Left lung (tissue), 14 donors: ENCODE measurements at regions of chr9 and their contacts with region 1.

Region 1: DNA sequence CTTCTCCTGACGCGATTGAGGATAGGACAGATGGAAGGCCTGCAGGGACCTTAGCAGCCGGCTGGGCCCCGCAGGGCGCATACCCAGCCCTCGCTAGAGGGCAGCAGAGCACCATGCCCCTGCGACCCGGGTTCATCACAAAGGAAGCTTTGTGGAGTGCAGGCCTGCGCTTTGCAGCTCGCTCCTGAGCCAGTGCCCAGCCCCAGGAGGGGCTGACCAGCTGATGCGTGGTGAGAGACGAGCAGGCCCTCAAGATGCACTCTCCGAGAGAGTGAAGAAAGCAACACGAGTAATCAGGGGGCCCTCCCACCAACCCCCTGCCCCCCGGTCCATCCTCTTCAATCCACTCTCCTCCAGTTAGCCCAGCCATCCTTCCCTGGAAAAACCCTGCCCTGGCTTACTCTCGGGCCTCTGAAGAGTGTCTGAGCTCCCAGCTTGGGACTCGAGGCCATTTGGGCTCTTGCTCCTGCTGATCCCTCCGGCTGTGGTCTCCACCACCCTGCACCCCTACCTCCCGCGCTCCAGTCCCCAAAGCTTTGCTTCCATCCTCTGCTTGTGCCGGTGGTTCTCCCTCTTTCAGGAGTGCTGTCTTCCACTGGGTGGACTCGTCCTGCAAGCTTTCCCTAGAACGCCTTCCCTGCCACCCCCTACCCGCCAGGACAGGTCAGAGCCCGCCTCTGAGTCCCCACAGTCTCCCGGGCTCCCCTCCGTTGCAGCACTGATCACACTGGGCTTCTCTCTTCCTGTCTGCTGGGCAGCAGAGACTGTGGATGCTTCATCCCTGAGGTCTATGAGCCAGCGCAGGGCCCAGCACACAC is 9.1 kb upstream of the KIF12 start:
- DNase-seq: peak; percentile 72 to 92 (median 84)
- ATAC-seq: peak; percentile 100
- H3K4me3 ChIP-seq: no peak overlapping the region
- H3K27ac ChIP-seq: no peak overlapping the region
- H3K4me1 ChIP-seq: peaks cover 0 to 6% of the 10 kb centered on the region in 2 donors
- H3K27me3 ChIP-seq: peaks cover 0 to 6% of the 10 kb centered on the region in 2 donors
- CTCF ChIP-seq: peak; percentile 87 to 94

Region 2: GRCh38 chr9:114059047-114059803 is 49.0 kb before region 1 on chr9:
- intact Hi-C with region 1: no loop called
- DNase-seq: no peak
- ATAC-seq: no peak
- H3K4me3 ChIP-seq: no peak overlapping the region
- H3K27ac ChIP-seq: no peak overlapping the region
- H3K4me1 ChIP-seq: no peaks in the 10 kb centered on the region
- H3K27me3 ChIP-seq: no peaks in the 10 kb centered on the region
- CTCF ChIP-seq: no peak

Region 3: GRCh38 chr9:114291064-114291474 is 182.8 kb after region 1 on chr9:
- intact Hi-C with region 1: loop called in 1 of 2 experiments (anchors 5 kb)
- DNase-seq: peak; percentile 65 to 89 (median 72)
- ATAC-seq: peak; percentile 80
- H3K4me3 ChIP-seq: no peak overlapping the region
- H3K27ac ChIP-seq: no peak overlapping the region
- H3K4me1 ChIP-seq: no peaks in the 10 kb centered on the region
- H3K27me3 ChIP-seq: peaks cover 0 to 14% of the 10 kb centered on the region in 2 donors
- CTCF ChIP-seq: peak; percentile 84 to 95